ENCODE measurements at regions of chr11 and their contacts with region 1.

Region 1: DNA sequence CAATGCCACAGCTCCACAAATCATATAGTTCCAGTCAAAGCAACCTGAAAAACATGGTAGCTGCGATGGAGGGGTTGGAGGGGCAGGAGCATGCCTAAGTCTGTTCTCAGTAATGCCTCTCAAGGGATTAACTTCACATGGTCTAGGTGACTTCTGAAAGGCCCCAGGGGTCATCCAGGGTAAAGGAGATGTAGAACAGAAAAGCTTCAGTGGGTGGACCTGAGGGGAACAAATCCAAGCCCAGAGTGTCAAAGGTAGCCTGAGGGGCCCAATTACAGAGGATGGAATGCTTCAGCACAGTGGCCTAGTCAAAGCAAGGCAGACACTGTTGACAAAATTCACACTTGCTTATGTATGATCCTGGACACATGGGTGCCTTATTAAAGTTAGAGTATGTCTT is 23.3 kb downstream of the OR4D9 start:
- DNase-seq: no peak
- ATAC-seq: no peak

Region 2: GRCh38 chr11:59680287-59681154 is 145.8 kb after region 1 on chr11:
- intact Hi-C with region 1: loop called (anchors 5 kb)
- DNase-seq: peak; percentile 52
- ATAC-seq: peak; percentile 87